Uterus (tissue), 4 donors: ENCODE measurements at regions of chr1 and their contacts with region 1.

Region 1: DNA sequence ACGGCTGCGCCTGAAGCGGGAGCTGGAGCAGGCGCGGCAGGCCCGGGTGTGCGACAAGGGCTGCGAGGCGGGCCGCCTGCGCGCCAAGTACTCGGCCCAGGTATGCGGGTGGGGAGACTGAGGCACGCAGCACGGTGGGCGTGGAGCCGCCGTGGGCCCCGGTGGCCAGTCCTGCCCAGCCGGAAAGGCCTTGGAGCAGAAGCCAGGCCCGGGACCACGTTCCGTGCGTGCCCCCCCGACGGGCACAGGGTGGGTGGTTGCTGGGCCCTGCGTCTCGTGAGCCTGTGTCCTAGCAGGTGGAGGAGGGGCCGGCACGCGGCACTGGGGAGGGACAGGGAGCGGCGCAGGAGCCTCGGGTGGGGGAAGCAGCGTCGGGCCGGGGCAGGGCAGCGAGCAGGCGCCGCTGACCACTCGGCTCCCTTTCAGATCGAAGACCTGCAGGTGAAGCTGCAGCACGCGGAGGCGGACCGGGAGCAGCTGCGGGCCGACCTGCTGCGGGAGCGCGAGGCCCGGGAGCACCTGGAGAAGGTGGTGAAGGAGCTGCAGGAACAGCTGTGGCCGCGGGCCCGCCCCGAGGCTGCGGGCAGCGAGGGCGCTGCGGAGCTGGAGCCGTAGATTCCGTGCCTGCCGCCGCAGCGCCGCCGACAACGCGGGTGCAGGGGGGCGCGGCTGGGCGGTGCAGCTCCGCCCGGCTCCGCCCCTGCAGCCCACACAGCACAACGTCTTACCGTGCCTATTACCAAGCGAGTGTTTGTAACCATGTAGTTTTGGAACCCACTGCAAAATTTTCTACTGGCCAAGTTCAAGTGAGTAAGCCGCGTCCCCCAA is 78.2 kb downstream of the SKI start:
- DNase-seq: no peak
- H3K4me3 ChIP-seq: no peak overlapping the region
- H3K27ac ChIP-seq: peak overlapping the region in 1 of 2 donors; percentile 29
- H3K4me1 ChIP-seq: peaks cover 0 to 4% of the 10 kb centered on the region in 2 donors
- H3K27me3 ChIP-seq: no peaks in the 10 kb centered on the region
- CTCF ChIP-seq: no peak
- POLR2A ChIP-seq: no peak

Region 2: DNA sequence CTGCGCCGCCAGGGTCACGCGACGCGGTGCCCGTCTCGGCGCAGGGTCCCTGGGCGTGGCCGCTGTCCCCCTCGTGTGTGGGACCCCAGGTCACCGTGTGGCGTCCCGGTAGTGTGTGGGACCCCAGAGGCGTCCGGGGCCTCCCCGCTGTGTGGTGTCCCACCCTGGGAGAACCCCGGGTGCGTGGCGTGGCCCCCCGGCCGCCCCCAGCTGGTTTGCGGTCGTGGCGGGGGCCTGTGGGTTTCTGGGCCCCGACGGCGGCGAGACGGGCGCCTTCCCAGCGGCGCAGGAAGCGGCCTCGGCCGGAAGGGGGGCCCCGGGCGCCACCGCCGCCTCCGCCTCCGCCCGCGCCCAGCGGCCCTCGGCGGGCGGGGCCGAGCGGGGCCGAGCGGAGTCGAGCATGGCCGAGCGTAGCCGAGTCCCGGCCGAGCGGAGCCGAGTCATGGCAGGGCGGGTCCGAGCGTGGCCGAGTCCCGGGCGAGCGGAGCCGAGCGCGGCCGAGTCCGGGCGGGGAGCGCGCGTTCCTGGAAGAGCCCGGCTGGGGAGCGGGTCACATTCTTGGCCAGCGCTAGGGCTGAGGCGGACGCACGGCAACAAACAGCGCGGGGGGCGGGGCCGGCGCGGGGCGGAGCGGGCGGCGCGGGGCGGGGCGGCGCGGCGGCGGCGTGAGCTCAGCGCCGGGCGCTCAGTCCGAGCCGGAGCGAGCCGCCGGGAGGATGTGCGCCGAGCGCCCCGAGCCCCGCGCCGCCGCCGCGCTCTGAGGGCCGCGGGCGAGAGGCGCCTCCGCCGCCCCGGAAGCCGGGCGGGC is 78.8 kb before region 1 on chr1:
- intact Hi-C with region 1: loop called (anchors 2 kb)
- DNase-seq: peak; percentile 96 to 98
- H3K4me3 ChIP-seq: peak overlapping the region; percentile 68 to 95
- H3K27ac ChIP-seq: peak overlapping the region; percentile 99 to 100
- H3K4me1 ChIP-seq: peaks cover 0 to 5% of the 10 kb centered on the region in 2 donors
- H3K27me3 ChIP-seq: no peaks in the 10 kb centered on the region
- CTCF ChIP-seq: peak in 1 of 4 experiments; percentile 59
- POLR2A ChIP-seq: peak; percentile 80 to 95